ENCODE measurements at regions of chr1 and their contacts with region 1.

Region 1: DNA sequence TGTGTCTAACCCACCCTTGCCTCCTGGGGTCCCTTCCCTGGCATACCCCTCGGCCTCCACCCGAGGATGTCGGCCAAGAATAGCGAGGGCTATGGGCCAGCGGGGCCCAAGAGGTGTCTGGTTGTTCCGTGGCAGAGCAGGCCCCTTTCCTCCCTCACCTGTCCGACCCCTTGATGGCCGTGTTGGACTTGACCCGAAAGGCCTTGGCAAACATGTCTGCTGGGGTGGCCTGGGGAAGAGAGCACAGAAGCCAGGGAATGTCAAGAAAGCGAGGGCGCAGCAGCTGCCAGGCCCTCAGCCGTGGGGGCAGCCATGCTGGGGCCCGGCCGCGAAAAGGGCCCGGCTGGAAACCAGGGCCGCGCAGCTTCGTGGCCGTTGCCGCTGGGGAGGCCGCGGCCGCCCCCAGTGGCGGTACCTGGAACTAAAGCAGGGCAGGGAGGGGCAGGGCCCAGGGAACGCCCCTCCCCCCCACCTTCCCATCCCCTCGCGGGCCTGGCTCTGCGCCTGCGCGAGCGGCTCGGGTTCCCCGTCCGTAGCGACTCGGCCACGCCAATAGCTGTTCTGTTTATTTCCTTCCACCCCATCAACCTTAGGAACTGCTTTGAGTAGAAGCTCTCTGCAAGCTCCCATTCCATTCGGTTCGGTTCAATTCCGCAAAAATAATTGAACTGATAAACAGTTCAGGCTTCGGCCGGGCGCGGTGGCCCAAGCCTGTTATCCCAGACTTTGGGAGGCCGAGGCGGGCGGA is at the start of gene EIF2D:
- DNase-seq: peak; percentile 79
- ATAC-seq: peak; percentile 94
- H3K4me3 ChIP-seq: peak within 1 kb of the TSS; percentile 95 to 96
- H3K27ac ChIP-seq: peak within 1 kb of the TSS; percentile 74
- H3K4me1 ChIP-seq: peaks cover 8 to 12% of the 10 kb centered on the region in 2 experiments; a peak in 2 of 4 replicates
- H3K27me3 ChIP-seq: no peaks in the 10 kb centered on the region
- CTCF ChIP-seq: peak; percentile 79 to 95 (median 79)
- POLR2A ChIP-seq: peak; percentile 86
- RAD21 ChIP-seq: no peak
- total RNA-seq, gene EIF2D: 54.8 TPM

Region 2: DNA sequence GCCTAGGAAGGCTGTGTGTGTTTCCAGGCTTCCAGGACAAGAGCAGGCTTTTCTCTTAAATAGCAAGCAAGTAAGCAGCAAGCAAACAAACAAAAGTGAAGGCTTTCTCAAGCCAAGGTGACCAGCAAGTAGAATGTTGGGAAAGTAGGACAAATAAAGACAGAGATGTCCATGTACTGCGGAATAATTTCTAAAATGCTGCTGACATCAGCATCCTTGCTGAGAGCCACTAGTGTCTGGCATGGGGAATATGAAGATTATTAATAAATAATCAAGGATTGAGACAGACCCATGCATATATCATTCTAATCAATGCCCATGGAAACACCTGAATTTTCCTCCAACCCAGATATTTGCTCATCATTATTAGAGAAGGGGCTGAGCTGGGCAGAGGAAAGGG is 16.6 kb after region 1 on chr1:
- CTCF ChIA-PET with region 1: interaction called, 12 read pairs
- POLR2A ChIA-PET with region 1: interaction called, 5 read pairs
- RAD21 ChIA-PET with region 1: no interaction called
- intact Hi-C with region 1: loop called (anchors 2 kb)
- DNase-seq: no peak
- ATAC-seq: no peak
- H3K4me3 ChIP-seq: no peak overlapping the region
- H3K27ac ChIP-seq: no peak overlapping the region
- H3K4me1 ChIP-seq: peaks cover 0 to 6% of the 10 kb centered on the region in 2 experiments; a peak in 2 of 4 replicates
- H3K27me3 ChIP-seq: no peaks in the 10 kb centered on the region
- CTCF ChIP-seq: no peak
- POLR2A ChIP-seq: no peak
- RAD21 ChIP-seq: no peak

Region 3: GRCh38 chr1:206635080-206635977 is 23.0 kb after region 1 on chr1 and contains the start of gene DYRK3:
- CTCF ChIA-PET with region 1: interaction called, 12 read pairs
- POLR2A ChIA-PET with region 1: interaction called, 13 read pairs
- RAD21 ChIA-PET with region 1: interaction called in 1 of 2 experiments, 3 read pairs
- intact Hi-C with region 1: loop called (anchors 2 kb)
- DNase-seq: peak; percentile 72
- ATAC-seq: peak; percentile 91
- H3K4me3 ChIP-seq: peak within 1 kb of the TSS; percentile 67 to 78
- H3K27ac ChIP-seq: peak within 1 kb of the TSS; percentile 32; the same call in 1 of the 2 replicates
- H3K4me1 ChIP-seq: peaks cover 4 to 26% of the 10 kb centered on the region in 2 experiments; a peak in 3 of 4 replicates
- H3K27me3 ChIP-seq: no peaks in the 10 kb centered on the region
- CTCF ChIP-seq: no peak
- POLR2A ChIP-seq: peak; percentile 89
- RAD21 ChIP-seq: no peak
- total RNA-seq, gene DYRK3: 7.1 TPM

Region 4: DNA sequence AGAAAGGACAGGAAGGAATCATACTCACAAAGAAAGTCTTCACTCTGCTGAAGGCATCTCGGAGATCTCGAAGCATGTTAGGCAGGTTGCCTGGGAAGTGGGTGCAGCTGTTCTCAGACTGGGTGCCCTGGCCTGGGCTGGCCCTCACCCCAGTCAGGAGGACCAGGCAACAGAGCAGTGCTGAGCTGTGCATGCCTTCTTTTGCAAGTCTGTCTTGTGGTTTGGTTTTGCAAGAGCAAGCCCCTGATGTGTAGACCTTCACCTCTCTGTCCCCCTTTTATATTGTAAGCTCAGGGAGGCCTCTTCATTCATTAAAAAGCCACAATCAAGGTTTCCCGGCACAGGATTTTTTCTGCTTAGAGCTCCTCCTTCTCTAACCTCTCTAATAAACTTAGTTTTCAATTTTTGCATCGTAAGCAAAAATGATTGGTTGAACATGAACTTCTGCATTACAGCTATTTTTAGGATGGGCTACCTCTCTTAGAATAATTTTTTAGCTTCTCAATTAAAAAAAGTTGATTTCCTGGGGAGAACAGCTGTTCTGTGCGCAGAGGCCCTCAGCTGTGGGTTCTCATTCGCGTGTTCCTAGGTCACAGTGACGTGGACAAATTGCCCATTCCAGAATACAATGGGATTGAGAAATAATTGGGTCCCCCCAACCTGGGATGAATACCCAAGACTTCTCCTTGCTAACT is 160.1 kb after region 1 on chr1 and contains the start of gene IL10:
- CTCF ChIA-PET with region 1: no interaction called
- POLR2A ChIA-PET with region 1: no interaction called
- RAD21 ChIA-PET with region 1: no interaction called
- intact Hi-C with region 1: no loop called
- DNase-seq: no peak
- ATAC-seq: no peak
- H3K4me3 ChIP-seq: no peak within 1 kb of the TSS
- H3K27ac ChIP-seq: no peak within 1 kb of the TSS
- H3K4me1 ChIP-seq: no peaks in the 10 kb centered on the region; a peak in 1 of 4 replicates
- H3K27me3 ChIP-seq: peaks cover 23% of the 10 kb centered on the region; the same call in 1 of the 2 replicates
- CTCF ChIP-seq: no peak
- POLR2A ChIP-seq: no peak
- RAD21 ChIP-seq: no peak
- total RNA-seq, gene IL10: not detected